ENCODE measurements at regions of chr13 and their contacts with region 1.

Region 1: DNA sequence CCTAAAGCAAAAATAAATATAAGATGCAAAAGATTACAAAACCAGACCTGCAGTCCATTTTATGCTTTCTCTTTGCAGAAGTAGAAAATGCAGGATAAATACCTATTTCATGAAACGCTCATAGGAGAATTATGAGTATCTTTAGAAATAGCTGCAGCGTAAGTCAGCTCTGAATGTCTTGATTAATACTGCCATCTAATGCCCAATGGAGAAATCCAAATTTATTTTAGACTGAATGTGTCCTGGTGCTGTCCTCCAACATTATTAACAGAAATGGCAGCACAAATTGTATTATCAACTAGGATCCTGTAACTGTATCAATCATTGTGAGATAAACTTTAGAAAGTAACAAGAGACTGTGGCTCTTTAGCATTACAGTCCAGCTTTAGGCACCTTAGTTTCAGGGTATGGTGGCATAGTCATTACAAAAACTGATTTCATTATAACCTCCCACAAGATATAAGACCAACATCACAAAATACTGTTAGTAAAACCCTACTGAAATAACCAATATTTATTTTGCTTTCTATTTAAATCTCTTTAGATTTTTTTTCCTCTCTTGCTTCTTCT is 162.1 kb upstream of the MIR17HG start:
- DNase-seq: peak in 1 of 2 experiments; percentile 51
- H3K4me3 ChIP-seq: no peak overlapping the region
- H3K4me3 Mint-ChIP-seq: no peak overlapping the region
- H3K27ac Mint-ChIP-seq: no peak overlapping the region
- H3K4me1 ChIP-seq: peaks cover 46% of the 10 kb centered on the region
- H3K4me1 Mint-ChIP-seq: peaks cover 32% of the 10 kb centered on the region
- H3K27me3 ChIP-seq: no peaks in the 10 kb centered on the region
- H3K27me3 Mint-ChIP-seq: no peaks in the 10 kb centered on the region
- CTCF ChIP-seq: peak; percentile 45 to 58

Region 2: GRCh38 chr13:90839061-90839460 is 346.3 kb before region 1 on chr13:
- CTCF ChIA-PET with region 1: no interaction called
- POLR2A ChIA-PET with region 1: no interaction called
- intact Hi-C with region 1: loop called (anchors 5 kb)
- DNase-seq: peak; percentile 89 to 94
- H3K4me3 ChIP-seq: no peak overlapping the region
- H3K4me3 Mint-ChIP-seq: no peak overlapping the region
- H3K27ac Mint-ChIP-seq: no peak overlapping the region
- H3K4me1 ChIP-seq: peaks cover 36% of the 10 kb centered on the region
- H3K4me1 Mint-ChIP-seq: peaks cover 36% of the 10 kb centered on the region
- H3K27me3 ChIP-seq: no peaks in the 10 kb centered on the region
- H3K27me3 Mint-ChIP-seq: no peaks in the 10 kb centered on the region
- CTCF ChIP-seq: no peak

Region 3: GRCh38 chr13:90979059-90979458 is 206.3 kb before region 1 on chr13:
- CTCF ChIA-PET with region 1: no interaction called
- POLR2A ChIA-PET with region 1: no interaction called
- intact Hi-C with region 1: loop called (anchors 5 kb)
- DNase-seq: no peak
- H3K4me3 ChIP-seq: no peak overlapping the region
- H3K4me3 Mint-ChIP-seq: no peak overlapping the region
- H3K27ac Mint-ChIP-seq: no peak overlapping the region
- H3K4me1 ChIP-seq: no peaks in the 10 kb centered on the region
- H3K4me1 Mint-ChIP-seq: no peaks in the 10 kb centered on the region
- H3K27me3 ChIP-seq: peaks cover 1% of the 10 kb centered on the region; the same call in 1 of the 2 replicates
- H3K27me3 Mint-ChIP-seq: peaks cover 16% of the 10 kb centered on the region
- CTCF ChIP-seq: no peak

Region 4: DNA sequence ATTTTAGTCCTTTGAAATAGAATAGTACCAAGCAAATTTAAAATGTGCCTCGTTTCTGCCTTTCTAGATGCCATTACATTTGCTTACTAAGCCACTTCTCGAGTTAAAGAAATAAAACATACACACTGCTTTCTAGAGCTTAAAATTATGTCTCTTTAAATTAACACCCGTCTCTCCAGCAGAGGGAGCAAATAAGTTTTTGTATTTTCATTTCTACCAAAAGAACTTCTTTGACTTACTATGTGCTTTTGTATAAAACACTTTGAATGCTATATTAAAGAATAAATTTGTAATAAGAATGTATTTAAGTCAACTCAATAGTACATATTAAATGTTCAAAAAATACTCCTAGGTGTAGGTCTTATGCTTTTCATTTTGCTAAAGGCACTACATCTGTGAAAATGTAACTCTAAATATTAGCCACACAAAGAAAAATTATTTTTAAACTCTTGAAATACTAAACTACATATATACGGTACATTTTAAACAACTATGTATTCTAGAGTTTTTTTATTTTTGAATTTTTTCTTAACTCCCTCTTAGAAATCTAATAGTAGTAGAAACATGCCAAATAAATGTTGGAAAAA is 107.2 kb before region 1 on chr13:
- CTCF ChIA-PET with region 1: interaction called, 15 read pairs
- POLR2A ChIA-PET with region 1: no interaction called
- intact Hi-C with region 1: loop called (anchors 1 kb)
- DNase-seq: peak in 1 of 2 experiments; percentile 15
- H3K4me3 ChIP-seq: no peak overlapping the region
- H3K4me3 Mint-ChIP-seq: no peak overlapping the region
- H3K27ac Mint-ChIP-seq: no peak overlapping the region
- H3K4me1 ChIP-seq: peaks cover 17% of the 10 kb centered on the region
- H3K4me1 Mint-ChIP-seq: peaks cover 23% of the 10 kb centered on the region
- H3K27me3 ChIP-seq: no peaks in the 10 kb centered on the region
- H3K27me3 Mint-ChIP-seq: no peaks in the 10 kb centered on the region
- CTCF ChIP-seq: peak; percentile 51 to 56

Region 5: DNA sequence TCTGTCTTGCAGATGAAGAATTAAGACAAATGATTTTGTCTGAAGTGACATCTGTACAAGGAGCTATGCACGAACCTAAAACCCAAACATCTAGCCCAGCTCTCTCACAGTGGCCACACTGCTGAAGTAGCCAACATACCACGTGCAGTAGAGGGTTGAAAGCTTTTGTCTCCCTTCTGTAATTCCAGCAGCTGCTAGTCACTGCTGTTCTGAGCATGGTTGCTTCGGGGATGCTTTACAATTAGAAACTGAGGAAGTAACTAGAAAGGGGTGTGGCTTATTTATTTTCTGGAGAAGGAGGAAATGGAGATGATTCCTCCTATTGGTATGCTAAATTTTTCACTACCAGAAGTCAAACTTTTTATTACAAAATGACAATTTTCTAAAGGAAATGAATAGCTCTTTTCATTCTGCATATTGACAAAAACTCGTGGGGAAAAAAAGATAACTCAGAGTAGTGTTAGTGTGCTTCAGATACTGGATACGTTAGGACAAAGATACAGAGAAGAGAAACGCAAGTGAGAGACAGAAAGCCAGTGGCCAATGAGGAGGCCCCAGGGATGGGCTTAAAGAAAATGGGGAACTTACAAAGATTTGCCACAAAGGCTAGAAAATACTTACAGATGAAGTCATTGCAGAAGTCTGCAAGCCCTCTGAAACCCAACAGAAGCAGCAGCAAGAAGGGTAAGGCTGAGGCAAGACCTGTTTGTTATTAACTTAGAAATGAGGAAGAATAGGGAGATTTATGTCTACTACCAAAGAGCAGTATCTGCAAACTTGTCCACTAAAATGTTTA is 30.6 kb before region 1 on chr13:
- CTCF ChIA-PET with region 1: interaction called, 14 read pairs
- POLR2A ChIA-PET with region 1: interaction called, 11 read pairs
- intact Hi-C with region 1: loop called (anchors 1 kb)
- DNase-seq: peak; percentile 36 to 50
- H3K4me3 ChIP-seq: peak overlapping the region; percentile 20
- H3K4me3 Mint-ChIP-seq: peak overlapping the region; percentile 72
- H3K27ac Mint-ChIP-seq: peak overlapping the region; percentile 96
- H3K4me1 ChIP-seq: peaks cover 71% of the 10 kb centered on the region
- H3K4me1 Mint-ChIP-seq: peaks cover 49% of the 10 kb centered on the region
- H3K27me3 ChIP-seq: no peaks in the 10 kb centered on the region
- H3K27me3 Mint-ChIP-seq: no peaks in the 10 kb centered on the region
- CTCF ChIP-seq: no peak

Region 6: DNA sequence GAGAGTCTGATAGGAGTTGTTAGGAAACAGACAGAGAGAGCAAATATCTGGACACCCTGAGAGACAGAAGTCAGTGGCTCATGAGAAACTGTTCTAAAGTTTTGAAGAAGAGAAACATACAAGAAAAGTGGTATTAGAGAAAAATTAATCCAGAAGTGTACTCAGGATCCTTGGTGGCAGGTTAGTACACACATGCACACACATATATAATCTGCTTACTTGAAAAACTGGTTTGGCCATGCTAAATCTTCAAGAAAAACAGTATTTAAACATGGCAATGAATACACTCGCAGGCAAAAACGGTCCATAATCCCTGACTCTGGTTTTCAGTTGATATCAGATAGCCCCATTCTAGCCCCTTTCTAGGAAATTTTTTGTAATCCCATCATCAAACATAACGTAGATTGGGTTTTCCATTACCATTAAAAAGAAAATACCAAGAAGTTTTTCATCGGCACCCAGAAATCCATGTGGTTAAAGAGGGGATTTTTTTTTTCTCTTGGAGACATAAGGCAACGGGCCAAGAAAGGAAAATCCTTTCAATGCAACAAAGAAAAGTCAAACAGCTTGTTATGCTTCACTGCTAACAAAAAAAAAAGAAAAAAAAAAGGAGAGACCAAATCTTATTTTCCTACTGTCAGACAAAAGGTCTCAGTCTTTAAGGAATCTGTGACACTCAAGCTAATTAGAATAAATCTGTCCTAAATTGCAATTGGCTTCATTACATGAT is 15.9 kb before region 1 on chr13:
- CTCF ChIA-PET with region 1: interaction called, 4 read pairs
- POLR2A ChIA-PET with region 1: no interaction called
- intact Hi-C with region 1: loop called (anchors 1 kb)
- DNase-seq: no peak
- H3K4me3 ChIP-seq: no peak overlapping the region
- H3K4me3 Mint-ChIP-seq: no peak overlapping the region
- H3K27ac Mint-ChIP-seq: no peak overlapping the region
- H3K4me1 ChIP-seq: peaks cover 7% of the 10 kb centered on the region
- H3K4me1 Mint-ChIP-seq: peaks cover 8% of the 10 kb centered on the region
- H3K27me3 ChIP-seq: no peaks in the 10 kb centered on the region
- H3K27me3 Mint-ChIP-seq: no peaks in the 10 kb centered on the region
- CTCF ChIP-seq: no peak

Region 7: DNA sequence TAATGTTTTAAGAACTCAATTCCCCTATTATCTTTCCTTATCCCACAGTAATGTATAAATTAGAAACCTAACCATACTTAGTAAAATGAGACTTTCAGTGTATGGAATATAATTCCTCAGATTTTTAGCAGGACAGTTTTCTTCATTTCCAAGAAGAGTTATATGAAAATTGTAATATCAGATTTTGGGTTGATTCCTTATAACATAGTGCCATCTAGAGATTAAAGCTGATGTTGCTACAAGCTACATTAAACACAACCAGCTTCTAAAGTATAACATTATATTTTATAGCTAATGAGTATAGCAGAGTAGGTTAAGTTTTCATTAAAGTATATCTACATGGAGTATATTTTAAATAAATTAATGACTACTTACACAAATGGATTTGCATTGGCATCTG is 62.4 kb after region 1 on chr13:
- CTCF ChIA-PET with region 1: interaction called, 15 read pairs
- POLR2A ChIA-PET with region 1: no interaction called
- intact Hi-C with region 1: loop called (anchors 1 kb)
- DNase-seq: no peak
- H3K4me3 ChIP-seq: no peak overlapping the region
- H3K4me3 Mint-ChIP-seq: no peak overlapping the region
- H3K27ac Mint-ChIP-seq: no peak overlapping the region
- H3K4me1 ChIP-seq: peaks cover 12% of the 10 kb centered on the region
- H3K4me1 Mint-ChIP-seq: no peaks in the 10 kb centered on the region
- H3K27me3 ChIP-seq: no peaks in the 10 kb centered on the region; the same call in 1 of the 2 replicates
- H3K27me3 Mint-ChIP-seq: peaks cover 11% of the 10 kb centered on the region
- CTCF ChIP-seq: peak; percentile 24 to 40